HAP-1 (cell line): ENCODE measurements at regions of chr9 and their contacts with region 1.

Region 1: DNA sequence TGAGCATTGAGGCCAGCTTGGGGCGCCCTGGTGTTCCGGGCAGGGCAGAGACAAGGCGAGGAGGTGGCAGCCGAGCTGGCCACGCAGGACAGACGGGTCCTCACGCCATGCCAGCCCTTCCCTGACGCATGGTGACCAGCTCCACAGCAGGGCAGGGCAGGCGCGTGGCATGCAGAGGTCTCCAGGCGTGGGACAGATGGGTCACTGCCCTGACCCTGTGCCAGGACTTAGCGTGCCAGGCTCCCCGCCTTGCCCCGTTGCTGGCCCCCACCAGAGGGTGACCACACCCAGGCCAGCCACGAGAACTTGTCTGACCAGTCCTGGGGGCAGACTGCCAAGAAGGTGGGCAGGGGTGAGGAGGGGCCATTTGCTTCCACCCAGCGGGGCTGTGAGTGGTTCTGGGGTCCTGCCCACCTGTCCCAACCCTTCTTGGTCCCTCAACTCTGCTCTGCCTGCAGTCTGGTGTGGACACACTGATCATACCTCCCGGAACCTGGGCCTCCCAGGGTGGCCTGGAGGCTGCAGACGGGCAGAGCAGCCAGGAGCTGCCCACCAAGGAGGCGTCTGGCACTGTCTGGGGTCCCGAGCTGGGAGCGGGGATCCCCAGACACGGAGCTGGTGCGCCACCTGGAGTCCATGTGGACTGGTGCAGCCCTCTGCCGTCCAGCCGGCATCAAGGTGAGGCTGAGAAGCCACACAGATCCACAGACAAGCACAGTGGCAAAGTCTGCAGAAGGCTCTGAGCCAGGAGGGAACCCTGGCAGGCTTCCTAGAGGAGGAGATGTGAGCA is at the start of gene RNF224:
- DNase-seq: peak; percentile 65 to 90
- H3K4me3 ChIP-seq: no peak within 1 kb of the TSS
- H3K4me1 ChIP-seq: peaks cover 11% of the 10 kb centered on the region
- H3K27me3 ChIP-seq: no peaks in the 10 kb centered on the region

Region 2: DNA sequence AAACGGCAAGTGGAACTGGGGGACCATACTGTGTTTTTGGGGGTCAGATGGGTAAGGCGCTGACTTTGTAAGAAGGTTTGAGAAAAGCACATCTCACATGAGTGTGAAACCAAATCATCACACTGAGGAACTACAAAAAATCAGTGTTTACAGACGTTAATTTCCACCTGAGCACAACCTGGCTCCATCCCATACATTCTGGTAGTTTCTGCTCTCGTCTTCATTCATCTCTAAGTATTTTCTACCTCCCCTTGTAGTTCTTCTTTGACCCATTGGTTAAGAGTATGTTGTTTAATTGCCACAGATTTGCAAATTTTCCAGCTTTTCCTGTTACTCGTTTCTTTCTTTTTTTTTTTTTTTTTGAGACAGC is 103.8 kb before region 1 on chr9:
- in situ Hi-C with region 1: loop called (anchors 5 kb)
- DNase-seq: no peak
- H3K4me3 ChIP-seq: no peak overlapping the region
- H3K4me1 ChIP-seq: peaks cover 17% of the 10 kb centered on the region
- H3K27me3 ChIP-seq: no peaks in the 10 kb centered on the region